Heart right ventricle (tissue), 16 donors: ENCODE measurements at regions of chr4 and their contacts with region 1.

Region 1: GRCh38 chr4:158729716-158730559 is 6.7 kb upstream of the PPID start:
- DNase-seq: peak; percentile 41 to 69
- ATAC-seq: peak; percentile 89 to 97 (median 96)
- H3K4me3 ChIP-seq: no peak overlapping the region
- H3K27ac ChIP-seq: no peak overlapping the region
- H3K4me1 ChIP-seq: peaks cover 0 to 8% (median 0%) of the 10 kb centered on the region in 9 donors
- H3K27me3 ChIP-seq: no peaks in the 10 kb centered on the region
- CTCF ChIP-seq: peak; percentile 84 to 99 (median 87)

Region 2: GRCh38 chr4:158768555-158769174 is 38.7 kb after region 1 on chr4 and contains the start of gene FNIP2:
- intact Hi-C with region 1: loop called in 5 of 10 experiments (anchors 5 kb)
- DNase-seq: peak; percentile 85 to 87
- ATAC-seq: peak; percentile 91 to 97 (median 94)
- H3K4me3 ChIP-seq: peak within 1 kb of the TSS; percentile 81 to 93 (median 88)
- H3K27ac ChIP-seq: peak within 1 kb of the TSS; percentile 73 to 95 (median 91)
- H3K4me1 ChIP-seq: peaks cover 8 to 57% (median 43%) of the 10 kb centered on the region in 9 donors
- H3K27me3 ChIP-seq: no peaks in the 10 kb centered on the region
- CTCF ChIP-seq: no peak
- total RNA-seq, gene FNIP2: 34.1 to 89.7 (median 53.4) TPM

Region 3: DNA sequence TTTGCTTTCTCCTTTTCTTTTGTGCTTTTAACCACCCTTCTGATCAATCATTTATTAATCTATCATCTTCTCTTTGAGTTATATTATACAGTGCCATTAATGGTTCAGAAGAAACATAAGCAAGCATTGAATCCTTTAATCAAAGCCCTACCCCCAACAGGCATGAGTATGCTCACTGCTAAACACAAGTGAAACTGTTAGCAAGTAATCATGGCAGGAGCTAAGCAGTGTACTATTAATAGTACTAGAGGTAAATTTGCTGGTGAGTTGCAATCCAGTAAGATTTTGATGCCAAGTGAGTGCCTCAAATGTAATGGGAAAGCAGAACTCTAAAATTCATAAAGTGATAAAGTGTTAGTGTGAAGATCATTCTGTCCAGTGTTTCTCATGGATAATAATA is 96.1 kb after region 1 on chr4:
- intact Hi-C with region 1: no loop called
- DNase-seq: no peak
- ATAC-seq: peak; percentile 30 to 79 (median 55)
- H3K4me3 ChIP-seq: no peak overlapping the region
- H3K27ac ChIP-seq: peak overlapping the region; percentile 40 to 83 (median 68)
- H3K4me1 ChIP-seq: peaks cover 27 to 76% (median 63%) of the 10 kb centered on the region in 9 donors
- H3K27me3 ChIP-seq: no peaks in the 10 kb centered on the region
- CTCF ChIP-seq: no peak

Region 4: GRCh38 chr4:158850800-158851644 is 121.1 kb after region 1 on chr4:
- intact Hi-C with region 1: loop called (anchors 1 to 5 kb)
- DNase-seq: no peak
- ATAC-seq: no peak
- H3K4me3 ChIP-seq: no peak overlapping the region
- H3K27ac ChIP-seq: peak overlapping the region in 1 of 10 donors; percentile 38
- H3K4me1 ChIP-seq: peaks cover 0 to 42% (median 8%) of the 10 kb centered on the region in 9 donors
- H3K27me3 ChIP-seq: no peaks in the 10 kb centered on the region
- CTCF ChIP-seq: peak; percentile 63 to 82 (median 73)

Region 5: GRCh38 chr4:159201168-159201567 is 471.2 kb after region 1 on chr4:
- intact Hi-C with region 1: loop called in 9 of 10 experiments (anchors 2 to 10 kb)
- DNase-seq: no peak
- ATAC-seq: peak in 5 of 8 donors; percentile 32 to 77 (median 46)
- H3K4me3 ChIP-seq: peak overlapping the region in 1 of 10 donors; percentile 19
- H3K27ac ChIP-seq: peak overlapping the region; percentile 20 to 85 (median 66)
- H3K4me1 ChIP-seq: peaks cover 10 to 88% (median 61%) of the 10 kb centered on the region in 9 donors
- H3K27me3 ChIP-seq: no peaks in the 10 kb centered on the region
- CTCF ChIP-seq: no peak

Region 6: DNA sequence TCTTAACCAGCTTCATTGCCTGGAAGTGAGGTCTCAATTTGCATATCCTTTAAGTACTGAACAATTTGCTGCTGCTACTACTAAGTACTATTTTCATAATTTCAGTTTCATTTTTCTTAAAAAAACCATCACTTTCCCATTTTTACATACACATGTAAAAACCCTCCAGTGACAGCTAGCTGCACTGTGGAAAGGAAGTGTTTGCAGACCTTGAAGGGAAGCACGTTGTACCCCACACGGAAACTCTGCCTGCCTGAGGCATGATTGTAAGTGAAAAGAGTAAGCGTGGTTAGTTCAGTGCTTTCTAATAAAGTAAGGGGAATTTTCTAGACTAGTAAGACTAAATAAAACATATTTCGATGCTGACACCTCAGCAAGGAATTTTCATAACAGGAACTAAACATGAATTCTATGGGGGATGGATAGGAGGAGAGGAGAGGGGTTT is 476.5 kb after region 1 on chr4:
- intact Hi-C with region 1: loop called in 9 of 10 experiments (anchors 2 to 10 kb)
- DNase-seq: no peak
- ATAC-seq: peak in 1 of 8 donors; percentile 30
- H3K4me3 ChIP-seq: no peak overlapping the region
- H3K27ac ChIP-seq: peak overlapping the region in 6 of 10 donors; percentile 7 to 36 (median 23)
- H3K4me1 ChIP-seq: peaks cover 8 to 89% (median 58%) of the 10 kb centered on the region in 9 donors
- H3K27me3 ChIP-seq: no peaks in the 10 kb centered on the region
- CTCF ChIP-seq: no peak